Activated CD8-positive, alpha-beta memory T cell treated with anti-CD3 and anti-CD28 coated beads, Interleukin-2, amount 10 ng/mL, durations not matched to agents 7 days and 5 days (primary cell): ENCODE measurements at regions of chr12 and their contacts with region 1.

Region 1: DNA sequence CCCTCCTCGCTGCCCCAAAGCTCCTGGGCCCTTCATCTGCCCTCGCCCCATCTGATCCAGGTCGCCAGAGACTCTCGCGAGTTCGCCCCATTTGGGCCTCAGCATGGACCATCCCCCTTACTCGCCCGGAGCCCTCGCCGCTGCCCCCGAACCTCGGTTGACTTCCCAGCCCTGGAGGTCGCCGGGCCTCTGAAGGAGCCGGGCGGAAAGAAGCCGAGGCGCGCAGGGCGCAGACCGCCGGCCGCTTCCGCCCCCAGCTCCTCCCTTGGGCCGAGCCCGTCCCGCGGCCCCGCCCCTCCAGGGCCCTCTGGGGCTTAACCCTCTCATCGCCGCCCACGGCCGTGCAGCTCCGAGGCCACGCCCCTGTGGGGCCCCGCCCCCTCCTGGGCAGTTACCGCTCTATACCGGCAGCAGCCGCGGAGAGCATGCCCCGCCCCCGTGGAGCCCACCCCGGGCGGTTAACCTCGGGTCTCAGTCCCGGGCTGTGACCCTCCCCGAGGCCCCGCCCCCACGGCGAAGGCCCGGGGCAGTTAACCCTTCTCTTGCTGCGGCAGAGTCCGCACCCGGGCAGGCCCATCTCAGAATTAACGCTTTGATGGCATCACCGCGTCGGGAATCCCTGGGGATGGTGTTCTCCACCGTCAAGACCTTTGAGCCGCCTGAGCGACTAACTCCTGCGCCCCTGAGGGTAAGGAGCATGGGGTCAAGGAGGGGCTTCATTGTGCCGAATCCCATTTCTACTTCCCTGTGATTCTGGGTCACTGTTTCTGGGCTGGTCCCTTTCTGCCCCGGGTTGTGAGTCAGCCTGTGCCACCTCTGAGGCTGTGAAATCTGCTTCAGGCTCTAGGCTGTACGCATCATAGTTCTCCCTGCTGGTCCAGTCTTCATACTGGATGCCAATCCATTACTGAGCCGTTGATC is at the start of gene SPSB2:
- DNase-seq: peak; percentile 99
- ATAC-seq: peak; percentile 79
- H3K4me3 Mint-ChIP-seq: peak within 1 kb of the TSS; percentile 77
- H3K27ac Mint-ChIP-seq: peak within 1 kb of the TSS; percentile 91
- H3K4me1 Mint-ChIP-seq: peaks cover 58% of the 10 kb centered on the region
- H3K27me3 Mint-ChIP-seq: no peaks in the 10 kb centered on the region
- total RNA-seq, gene SPSB2: 10.5 to 14.4 TPM

Region 2: DNA sequence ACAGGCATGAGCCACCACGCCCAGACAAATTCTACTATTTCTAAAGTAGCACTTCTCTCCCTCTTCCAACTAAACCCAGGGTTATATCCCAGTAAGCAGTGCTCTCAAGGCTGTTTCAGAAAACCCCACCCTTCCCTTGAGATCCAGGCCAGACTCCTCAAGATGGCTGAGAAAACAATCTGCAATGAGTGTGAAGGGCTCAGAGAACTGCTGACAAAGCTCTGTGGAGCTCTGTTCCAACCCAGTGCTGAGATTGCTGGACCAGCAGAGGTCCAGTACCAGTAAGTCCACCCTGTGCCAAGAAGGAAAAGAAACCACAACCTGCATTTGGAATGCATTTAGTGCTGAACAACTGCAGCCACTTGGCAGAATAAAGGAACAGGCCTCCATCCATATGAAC is 313.9 kb before region 1 on chr12:
- CTCF ChIA-PET with region 1: interaction called, 10 read pairs
- DNase-seq: no peak
- ATAC-seq: no peak
- H3K4me3 Mint-ChIP-seq: no peak overlapping the region
- H3K27ac Mint-ChIP-seq: no peak overlapping the region
- H3K4me1 Mint-ChIP-seq: peaks cover 37% of the 10 kb centered on the region
- H3K27me3 Mint-ChIP-seq: no peaks in the 10 kb centered on the region

Region 3: DNA sequence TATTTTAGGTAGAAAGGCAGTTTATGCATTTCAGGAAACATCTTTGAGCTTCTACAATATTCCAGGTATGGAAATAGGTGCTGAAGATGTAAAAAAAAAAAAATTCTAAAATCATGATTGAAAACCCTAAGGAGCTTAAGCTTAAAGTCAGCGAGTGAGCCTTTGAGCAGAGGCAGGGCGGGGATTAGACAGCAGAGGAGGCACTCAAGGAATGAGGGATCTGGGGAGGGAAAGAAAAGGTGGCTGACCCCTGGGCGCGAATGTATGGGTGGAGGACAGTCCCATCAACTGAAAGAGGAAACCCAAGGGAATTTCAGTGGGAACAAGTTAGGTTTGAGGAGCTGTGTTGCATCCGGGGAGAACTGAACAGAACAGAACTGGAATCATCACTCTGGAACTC is 113.6 kb before region 1 on chr12:
- CTCF ChIA-PET with region 1: no interaction called
- DNase-seq: no peak
- ATAC-seq: no peak
- H3K4me3 Mint-ChIP-seq: no peak overlapping the region
- H3K27ac Mint-ChIP-seq: no peak overlapping the region
- H3K4me1 Mint-ChIP-seq: peaks cover 25% of the 10 kb centered on the region
- H3K27me3 Mint-ChIP-seq: peaks cover 22% of the 10 kb centered on the region

Region 4: GRCh38 chr12:6771091-6771495 is 102.3 kb before region 1 on chr12:
- CTCF ChIA-PET with region 1: interaction called, 10 read pairs
- DNase-seq: no peak
- ATAC-seq: no peak
- H3K4me3 Mint-ChIP-seq: no peak overlapping the region
- H3K27ac Mint-ChIP-seq: peak overlapping the region; percentile 90
- H3K4me1 Mint-ChIP-seq: peaks cover 47% of the 10 kb centered on the region
- H3K27me3 Mint-ChIP-seq: no peaks in the 10 kb centered on the region

Region 5: GRCh38 chr12:6890789-6891645 is 17.7 kb after region 1 on chr12:
- CTCF ChIA-PET with region 1: interaction called, 90 read pairs
- DNase-seq: peak; percentile 99
- ATAC-seq: peak; percentile 95
- H3K4me3 Mint-ChIP-seq: peak overlapping the region; percentile 80
- H3K27ac Mint-ChIP-seq: peak overlapping the region; percentile 93
- H3K4me1 Mint-ChIP-seq: peaks cover 29% of the 10 kb centered on the region
- H3K27me3 Mint-ChIP-seq: no peaks in the 10 kb centered on the region

Region 6: DNA sequence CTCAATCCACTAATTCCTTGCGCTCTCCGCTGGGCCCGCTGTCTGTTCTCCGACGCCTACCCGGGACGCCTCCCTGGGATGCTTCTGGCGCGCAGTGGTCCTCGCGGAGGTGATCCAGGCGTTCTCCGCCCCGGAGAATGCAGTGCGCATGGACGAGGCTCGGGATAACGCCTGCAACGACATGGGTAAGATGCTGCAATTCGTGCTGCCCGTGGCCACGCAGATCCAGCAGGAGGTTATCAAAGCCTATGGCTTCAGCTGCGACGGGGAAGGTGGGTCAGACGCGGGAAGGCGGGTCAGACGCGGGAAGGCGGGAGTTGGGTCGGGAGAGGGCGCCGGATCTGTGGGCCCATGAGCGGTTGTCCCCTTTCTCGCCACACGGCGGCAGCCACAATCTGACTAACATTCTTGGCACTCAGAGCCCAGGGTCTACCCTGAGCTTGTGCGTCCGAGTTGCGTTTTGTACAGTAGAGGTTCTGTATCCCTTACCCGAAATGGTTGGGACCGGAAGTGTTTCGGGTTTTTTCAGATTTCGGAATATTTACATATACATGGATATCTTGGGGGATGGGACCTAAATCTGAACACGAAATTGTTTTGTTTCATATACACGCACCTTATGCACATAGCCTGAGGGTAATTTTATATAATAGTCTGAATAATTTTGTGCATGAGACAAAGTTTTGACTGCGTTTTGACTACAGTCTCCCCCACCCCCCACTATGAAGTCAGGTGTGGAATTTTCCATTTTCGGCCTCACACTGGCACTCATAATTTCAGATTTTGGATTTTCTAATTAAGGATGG is 71.2 kb after region 1 on chr12:
- CTCF ChIA-PET with region 1: interaction called, 36 read pairs
- DNase-seq: peak; percentile 95
- ATAC-seq: peak; percentile 50
- H3K4me3 Mint-ChIP-seq: peak overlapping the region; percentile 86
- H3K27ac Mint-ChIP-seq: peak overlapping the region; percentile 98
- H3K4me1 Mint-ChIP-seq: peaks cover 61% of the 10 kb centered on the region
- H3K27me3 Mint-ChIP-seq: peaks cover 4% of the 10 kb centered on the region

Region 7: DNA sequence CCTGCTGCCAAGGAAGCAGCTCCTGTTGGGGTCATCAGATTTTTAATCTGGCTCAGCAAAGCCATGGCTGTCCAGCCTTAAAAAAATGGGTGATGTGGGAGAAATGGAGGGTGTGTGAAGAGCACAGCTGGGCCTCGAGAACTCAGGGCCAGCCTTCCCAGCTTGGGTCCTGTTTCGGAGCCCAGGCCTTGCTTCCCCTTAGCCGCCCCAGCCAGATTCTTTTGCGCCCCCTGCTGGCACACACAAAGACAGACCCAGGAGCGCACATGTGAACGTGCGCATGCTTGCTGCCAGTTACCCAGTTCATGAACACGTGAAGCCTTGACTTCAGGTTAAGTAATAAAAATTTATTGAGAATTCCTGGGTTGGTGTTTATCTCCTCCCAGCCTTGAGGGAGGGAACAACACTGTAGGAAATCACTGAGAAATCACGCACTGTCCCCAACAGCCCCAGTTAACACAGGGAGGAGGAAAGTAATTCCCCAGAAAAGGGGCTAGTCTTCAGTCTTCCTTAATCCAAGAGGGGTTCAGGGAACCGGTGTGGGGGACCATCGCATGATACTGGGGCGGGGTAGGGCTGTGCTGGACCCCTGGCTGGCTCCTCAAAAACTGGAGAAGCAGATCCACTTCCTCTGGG is 91.8 kb after region 1 on chr12:
- CTCF ChIA-PET with region 1: interaction called, 12 read pairs
- DNase-seq: peak; percentile 91
- ATAC-seq: peak; percentile 58
- H3K4me3 Mint-ChIP-seq: no peak overlapping the region
- H3K27ac Mint-ChIP-seq: peak overlapping the region; percentile 82
- H3K4me1 Mint-ChIP-seq: peaks cover 61% of the 10 kb centered on the region
- H3K27me3 Mint-ChIP-seq: no peaks in the 10 kb centered on the region